ENCODE measurements at regions of chr16 and their contacts with region 1.

Region 1: DNA sequence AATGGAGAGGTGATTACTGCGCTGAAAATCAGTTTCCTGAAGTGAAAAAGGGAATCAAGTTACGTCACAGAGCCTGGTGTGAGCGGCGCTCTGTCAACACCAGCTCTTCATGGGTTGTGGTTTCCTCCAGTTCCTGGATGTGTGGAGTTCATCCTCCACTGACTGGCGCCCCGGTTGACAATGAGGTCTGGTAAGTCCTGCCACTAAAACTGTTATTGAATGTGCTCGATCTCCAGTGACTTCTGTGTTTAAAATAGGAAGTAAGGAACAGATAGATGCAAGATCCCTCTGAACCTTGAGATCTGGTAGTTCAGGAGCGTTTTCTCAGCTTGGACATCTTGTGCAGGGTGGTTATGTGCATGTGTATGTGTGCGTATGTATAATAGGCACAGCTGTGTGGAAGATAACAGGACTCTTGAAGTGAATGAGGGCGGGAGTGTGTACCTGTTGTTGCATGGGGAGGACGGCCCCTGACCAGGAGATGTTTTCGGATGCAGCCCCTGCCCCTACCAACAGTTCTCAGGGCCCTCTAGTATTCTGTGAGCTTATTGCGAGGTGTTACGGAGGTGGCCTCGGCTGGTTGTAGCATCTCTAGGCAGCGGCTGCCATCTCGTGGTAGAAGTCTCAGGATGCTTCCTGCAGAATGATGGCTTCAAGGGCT is 22.0 kb upstream of the GOT2 start:
- DNase-seq: peak; percentile 54 to 86 (median 80)
- ATAC-seq: peak; percentile 90
- H3K4me3 ChIP-seq: peak overlapping the region in 1 of 2 experiments; percentile 3
- H3K4me3 Mint-ChIP-seq: peak overlapping the region; percentile 65
- H3K27ac ChIP-seq: peak overlapping the region in 1 of 2 experiments; percentile 35
- H3K27ac Mint-ChIP-seq: peak overlapping the region; percentile 84
- H3K4me1 ChIP-seq: peaks cover 5% of the 10 kb centered on the region
- H3K4me1 Mint-ChIP-seq: peaks cover 8% of the 10 kb centered on the region
- H3K27me3 ChIP-seq: no peaks in the 10 kb centered on the region
- H3K27me3 Mint-ChIP-seq: no peaks in the 10 kb centered on the region
- CTCF ChIP-seq: peak; percentile 59

Region 2: DNA sequence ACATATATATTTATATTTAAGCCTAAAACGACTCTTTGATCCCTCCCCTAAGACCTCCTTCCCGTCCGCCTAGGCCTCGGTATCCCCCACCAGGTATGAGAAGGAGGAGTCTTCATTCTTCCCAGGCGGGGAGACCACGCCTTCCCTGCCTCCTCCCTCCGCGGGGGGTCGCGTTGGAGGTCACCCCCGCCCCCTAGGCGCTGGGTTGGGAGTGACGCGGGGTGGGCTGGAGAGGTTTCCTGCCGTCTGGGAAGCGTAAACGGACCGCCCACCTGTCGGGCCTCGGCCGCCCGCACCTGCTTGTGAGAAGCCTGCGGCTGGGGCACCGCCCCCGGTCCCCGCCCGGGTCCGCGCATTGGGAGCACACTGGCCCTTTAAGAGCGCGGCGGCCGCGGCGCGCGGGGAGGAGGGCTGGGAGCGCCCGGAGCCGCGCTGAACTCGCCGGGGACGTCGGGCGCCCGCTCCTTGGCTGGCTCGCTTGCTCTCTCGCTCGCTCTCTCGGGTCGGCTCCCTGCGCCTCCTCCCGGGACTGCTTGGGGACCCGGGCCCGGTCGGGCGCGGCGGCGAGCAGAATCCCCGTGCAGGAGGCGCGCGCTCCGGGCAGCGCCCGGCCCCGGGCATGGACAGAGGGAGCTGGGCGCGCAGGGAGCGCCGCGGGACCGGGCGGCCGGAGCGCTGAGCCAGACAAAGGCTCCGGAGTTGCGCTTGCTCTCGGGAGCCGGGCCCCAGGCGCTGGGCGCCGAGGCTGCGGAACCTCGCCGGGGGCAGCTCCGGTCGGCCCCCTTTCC is 730.6 kb before region 1 on chr16 and contains the start of gene MMP15:
- CTCF ChIA-PET with region 1: no interaction called
- POLR2A ChIA-PET with region 1: no interaction called
- intact Hi-C with region 1: loop called in 1 of 2 experiments (anchors 10 kb)
- DNase-seq: peak in 8 of 9 experiments; percentile 39 to 71 (median 60)
- ATAC-seq: peak; percentile 65
- H3K4me3 ChIP-seq: peak within 1 kb of the TSS; percentile 60 to 66
- H3K4me3 Mint-ChIP-seq: peak within 1 kb of the TSS; percentile 90
- H3K27ac ChIP-seq: peak within 1 kb of the TSS in 1 of 2 experiments; percentile 18
- H3K27ac Mint-ChIP-seq: peak within 1 kb of the TSS; percentile 83
- H3K4me1 ChIP-seq: peaks cover 8% of the 10 kb centered on the region
- H3K4me1 Mint-ChIP-seq: peaks cover 13% of the 10 kb centered on the region
- H3K27me3 ChIP-seq: peaks cover 0 to 10% of the 10 kb centered on the region in 2 experiments
- H3K27me3 Mint-ChIP-seq: peaks cover 6% of the 10 kb centered on the region
- CTCF ChIP-seq: no peak
- total RNA-seq, gene MMP15: 0.19 to 0.92 TPM

Region 3: GRCh38 chr16:58515125-58515870 is 240.8 kb before region 1 on chr16 and contains the start of gene SETD6:
- CTCF ChIA-PET with region 1: interaction called, 53 read pairs
- POLR2A ChIA-PET with region 1: interaction called, 7 read pairs
- intact Hi-C with region 1: loop called in 1 of 2 experiments (anchors 1 kb)
- DNase-seq: peak; percentile 25 to 81 (median 68)
- ATAC-seq: peak; percentile 59
- H3K4me3 ChIP-seq: peak within 1 kb of the TSS; percentile 72 to 92
- H3K4me3 Mint-ChIP-seq: peak within 1 kb of the TSS; percentile 90
- H3K27ac ChIP-seq: peak within 1 kb of the TSS; percentile 64 to 73
- H3K27ac Mint-ChIP-seq: peak within 1 kb of the TSS; percentile 80
- H3K4me1 ChIP-seq: peaks cover 13% of the 10 kb centered on the region
- H3K4me1 Mint-ChIP-seq: peaks cover 20% of the 10 kb centered on the region
- H3K27me3 ChIP-seq: no peaks in the 10 kb centered on the region
- H3K27me3 Mint-ChIP-seq: no peaks in the 10 kb centered on the region
- CTCF ChIP-seq: no peak
- total RNA-seq, gene SETD6: 17.3 to 17.4 TPM

Region 4: DNA sequence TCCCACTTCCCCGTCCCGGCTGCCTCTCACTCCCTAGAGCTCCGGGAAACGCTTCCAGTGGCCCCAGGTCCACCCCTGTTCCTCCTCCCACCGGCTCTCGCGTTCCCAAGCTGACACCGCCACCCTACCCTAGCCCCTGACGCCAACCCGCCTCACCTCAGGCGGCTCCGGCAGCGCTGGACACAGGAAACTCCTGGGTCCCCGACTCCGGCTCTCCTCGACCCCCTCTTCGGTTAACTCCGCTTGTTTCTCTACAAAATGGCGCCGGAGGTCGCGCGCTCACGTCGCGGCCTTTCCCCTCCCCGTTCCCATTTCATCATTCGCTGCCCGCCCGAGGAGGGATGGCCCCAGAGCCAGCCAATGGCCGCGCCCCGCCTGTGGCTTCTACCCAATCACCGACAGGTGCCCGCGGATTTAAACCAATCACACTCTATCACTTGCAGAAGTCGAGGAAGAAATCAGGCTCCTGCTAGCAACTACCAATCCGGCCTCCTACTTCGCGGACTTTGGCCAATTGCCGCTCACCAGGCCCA is 126.5 kb before region 1 on chr16 and contains the start of gene CNOT1:
- CTCF ChIA-PET with region 1: interaction called, 3 read pairs
- POLR2A ChIA-PET with region 1: no interaction called
- intact Hi-C with region 1: loop called in 1 of 2 experiments (anchors 2 kb)
- DNase-seq: peak; percentile 95 to 99 (median 97)
- ATAC-seq: peak; percentile 78
- H3K4me3 ChIP-seq: peak within 1 kb of the TSS; percentile 93
- H3K4me3 Mint-ChIP-seq: peak within 1 kb of the TSS; percentile 100
- H3K27ac ChIP-seq: peak within 1 kb of the TSS; percentile 91 to 98
- H3K27ac Mint-ChIP-seq: peak within 1 kb of the TSS; percentile 100
- H3K4me1 ChIP-seq: peaks cover 18% of the 10 kb centered on the region
- H3K4me1 Mint-ChIP-seq: peaks cover 30% of the 10 kb centered on the region
- H3K27me3 ChIP-seq: no peaks in the 10 kb centered on the region
- H3K27me3 Mint-ChIP-seq: no peaks in the 10 kb centered on the region
- CTCF ChIP-seq: no peak
- total RNA-seq, gene CNOT1: 165 to 177 TPM

Region 5: GRCh38 chr16:58741166-58741565 is 15.0 kb before region 1 on chr16:
- CTCF ChIA-PET with region 1: interaction called, 12 read pairs
- POLR2A ChIA-PET with region 1: interaction called, 4 read pairs
- intact Hi-C with region 1: no loop called
- DNase-seq: no peak
- ATAC-seq: no peak
- H3K4me3 ChIP-seq: no peak overlapping the region
- H3K4me3 Mint-ChIP-seq: no peak overlapping the region
- H3K27ac ChIP-seq: no peak overlapping the region
- H3K27ac Mint-ChIP-seq: no peak overlapping the region
- H3K4me1 ChIP-seq: no peaks in the 10 kb centered on the region
- H3K4me1 Mint-ChIP-seq: no peaks in the 10 kb centered on the region
- H3K27me3 ChIP-seq: no peaks in the 10 kb centered on the region
- H3K27me3 Mint-ChIP-seq: peaks cover 2% of the 10 kb centered on the region
- CTCF ChIP-seq: no peak